ENCODE measurements at regions of chr1 and their contacts with region 1.

Region 1: GRCh38 chr1:22704440-22705067 is 6.1 kb upstream of the EPHB2 start:
- DNase-seq: peak; percentile 17
- H3K4me3 ChIP-seq: no peak overlapping the region
- H3K27me3 ChIP-seq: 0 out of 2 replicates have a peak, but pooled peaks cover 2% of the 10 kb centered on the region
- CTCF ChIP-seq: peak; percentile 93

Region 2: DNA sequence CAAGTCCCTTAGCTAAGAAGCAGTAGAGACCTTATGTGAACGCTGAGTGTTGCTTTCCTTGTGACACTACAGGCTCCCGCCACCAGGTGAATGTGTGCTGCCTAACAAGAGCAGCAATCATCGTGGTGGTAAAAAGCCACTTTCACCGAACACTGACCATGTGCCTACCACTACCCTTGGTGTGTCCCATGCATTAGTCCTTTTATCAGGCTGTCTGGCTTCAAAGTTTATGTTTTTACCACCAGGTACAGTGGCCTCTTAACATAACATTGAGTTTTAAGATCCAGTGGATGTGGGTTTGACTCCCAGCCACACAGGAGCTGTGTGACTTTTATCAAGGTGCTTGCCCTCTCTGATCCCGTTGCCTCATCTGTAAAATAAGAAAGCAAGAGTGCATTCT is 49.9 kb before region 1 on chr1:
- CTCF ChIA-PET with region 1: no interaction called
- POLR2A ChIA-PET with region 1: no interaction called
- DNase-seq: no peak
- H3K4me3 ChIP-seq: no peak overlapping the region
- H3K27me3 ChIP-seq: peaks cover 27% of the 10 kb centered on the region
- CTCF ChIP-seq: no peak

Region 3: GRCh38 chr1:22691031-22691753 is 13.4 kb before region 1 on chr1:
- CTCF ChIA-PET with region 1: interaction called, 34 read pairs
- POLR2A ChIA-PET with region 1: no interaction called
- DNase-seq: no peak
- H3K4me3 ChIP-seq: no peak overlapping the region
- H3K27me3 ChIP-seq: no peaks in the 10 kb centered on the region
- CTCF ChIP-seq: no peak

Region 4: DNA sequence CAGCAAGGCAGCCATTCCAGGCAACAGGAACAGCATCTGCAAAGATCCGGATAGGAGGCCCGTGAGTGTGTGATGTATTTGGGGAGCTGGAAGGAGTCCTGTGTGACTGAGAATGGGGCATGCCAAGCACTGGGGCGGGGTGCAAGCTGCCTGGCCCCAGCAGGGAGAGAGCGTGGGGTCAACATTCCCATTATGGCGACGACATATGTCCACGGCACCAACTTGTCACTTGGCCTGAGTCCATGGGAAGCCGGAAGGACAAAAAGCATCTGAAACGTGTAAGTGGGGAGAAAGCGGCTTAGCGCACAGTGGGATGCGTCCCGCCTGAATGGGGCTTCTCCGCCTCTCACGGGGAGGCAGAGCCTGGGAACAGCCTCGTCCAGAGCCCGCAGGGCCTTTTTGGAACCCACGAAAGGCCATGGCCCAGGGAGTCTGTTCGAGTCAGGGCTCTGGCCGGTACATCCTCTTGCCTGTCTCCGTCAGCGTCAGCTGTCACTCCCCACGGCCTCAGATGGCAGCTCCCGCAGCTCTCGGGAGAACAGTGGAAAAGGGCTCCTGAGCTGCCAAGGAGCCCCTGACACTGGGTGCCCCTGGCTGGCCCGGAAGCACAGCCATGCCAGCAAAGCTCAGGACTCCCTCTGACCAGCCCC is 18.5 kb after region 1 on chr1:
- CTCF ChIA-PET with region 1: interaction called, 24 read pairs
- POLR2A ChIA-PET with region 1: no interaction called
- DNase-seq: no peak
- H3K4me3 ChIP-seq: no peak overlapping the region
- H3K27me3 ChIP-seq: no peaks in the 10 kb centered on the region
- CTCF ChIP-seq: no peak

Region 5: GRCh38 chr1:22850681-22851080 is 146.1 kb after region 1 on chr1:
- CTCF ChIA-PET with region 1: interaction called, 24 read pairs
- POLR2A ChIA-PET with region 1: no interaction called
- DNase-seq: no peak
- H3K4me3 ChIP-seq: no peak overlapping the region
- H3K27me3 ChIP-seq: no peaks in the 10 kb centered on the region; the same call in 1 of the 2 replicates
- CTCF ChIP-seq: no peak

Region 6: GRCh38 chr1:22889213-22889827 is 184.8 kb after region 1 on chr1:
- CTCF ChIA-PET with region 1: interaction called, 79 read pairs
- POLR2A ChIA-PET with region 1: no interaction called
- DNase-seq: no peak
- H3K4me3 ChIP-seq: no peak overlapping the region
- H3K27me3 ChIP-seq: no peaks in the 10 kb centered on the region
- CTCF ChIP-seq: peak; percentile 83

Measured in BJ (cell line).